Mammary epithelial cell (primary cell): ENCODE measurements at regions of chr5 and their contacts with region 1.

Region 1: GRCh38 chr5:137888857-137889759 is at the start of gene PKD2L2:
- DNase-seq: peak; percentile 80
- H3K4me3 ChIP-seq: peak within 1 kb of the TSS; percentile 11 to 47 (median 45)
- H3K27ac ChIP-seq: peak within 1 kb of the TSS; percentile 38
- H3K4me1 ChIP-seq: peaks cover 15% of the 10 kb centered on the region
- H3K27me3 ChIP-seq: no peaks in the 10 kb centered on the region
- CTCF ChIP-seq: no peak
- total RNA-seq, gene PKD2L2: not detected

Region 2: DNA sequence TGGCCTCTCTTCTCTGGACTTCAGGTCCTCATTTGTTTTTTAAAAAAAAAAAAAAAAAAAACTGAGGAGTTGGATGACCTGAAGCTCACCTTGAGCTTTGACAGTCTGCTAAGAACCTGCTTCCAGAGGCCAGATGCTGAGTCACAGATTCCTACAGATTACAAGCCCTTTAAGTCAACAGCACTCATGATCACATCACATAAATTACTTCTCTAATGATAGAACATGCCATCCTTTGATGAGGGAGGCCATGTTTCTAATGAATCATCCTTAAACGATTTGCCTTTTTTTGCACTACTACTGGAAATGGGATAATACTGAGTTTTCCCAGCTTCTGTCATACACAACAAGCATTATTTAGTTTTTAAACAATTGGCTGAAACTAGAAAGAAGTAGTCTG is 55.6 kb before region 1 on chr5:
- CTCF ChIA-PET with region 1: no interaction called
- dilution Hi-C with region 1: no loop called
- in situ Hi-C with region 1: no loop called
- intact Hi-C with region 1: loop called (anchors 5 kb)
- DNase-seq: peak; percentile 88
- H3K4me3 ChIP-seq: no peak overlapping the region
- H3K27ac ChIP-seq: no peak overlapping the region
- H3K4me1 ChIP-seq: peaks cover 10% of the 10 kb centered on the region
- H3K27me3 ChIP-seq: no peaks in the 10 kb centered on the region
- CTCF ChIP-seq: no peak

Region 3: DNA sequence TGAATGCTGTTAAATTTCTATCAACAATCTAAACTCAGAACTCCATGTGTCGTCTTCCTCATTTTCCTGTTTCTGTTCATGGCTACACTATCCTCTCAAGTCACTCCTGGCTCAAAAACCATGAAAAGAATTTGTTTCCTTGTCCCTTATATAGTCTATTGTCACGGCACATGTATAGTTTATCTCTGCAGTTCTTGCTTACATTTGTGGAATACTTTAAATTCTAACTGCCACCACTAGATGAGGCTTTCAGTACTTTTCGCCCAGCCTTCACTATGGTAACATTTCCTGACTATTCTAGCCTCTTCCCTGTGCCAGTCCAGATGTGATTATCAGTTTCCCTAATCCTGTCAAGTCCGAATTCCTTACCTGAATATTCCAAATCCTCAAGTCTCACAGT is 34.7 kb after region 1 on chr5:
- CTCF ChIA-PET with region 1: no interaction called
- dilution Hi-C with region 1: no loop called
- in situ Hi-C with region 1: no loop called
- intact Hi-C with region 1: loop called (anchors 1 kb)
- DNase-seq: no peak
- H3K4me3 ChIP-seq: no peak overlapping the region
- H3K27ac ChIP-seq: no peak overlapping the region
- H3K4me1 ChIP-seq: peaks cover 11% of the 10 kb centered on the region
- H3K27me3 ChIP-seq: no peaks in the 10 kb centered on the region
- CTCF ChIP-seq: no peak

Region 4: DNA sequence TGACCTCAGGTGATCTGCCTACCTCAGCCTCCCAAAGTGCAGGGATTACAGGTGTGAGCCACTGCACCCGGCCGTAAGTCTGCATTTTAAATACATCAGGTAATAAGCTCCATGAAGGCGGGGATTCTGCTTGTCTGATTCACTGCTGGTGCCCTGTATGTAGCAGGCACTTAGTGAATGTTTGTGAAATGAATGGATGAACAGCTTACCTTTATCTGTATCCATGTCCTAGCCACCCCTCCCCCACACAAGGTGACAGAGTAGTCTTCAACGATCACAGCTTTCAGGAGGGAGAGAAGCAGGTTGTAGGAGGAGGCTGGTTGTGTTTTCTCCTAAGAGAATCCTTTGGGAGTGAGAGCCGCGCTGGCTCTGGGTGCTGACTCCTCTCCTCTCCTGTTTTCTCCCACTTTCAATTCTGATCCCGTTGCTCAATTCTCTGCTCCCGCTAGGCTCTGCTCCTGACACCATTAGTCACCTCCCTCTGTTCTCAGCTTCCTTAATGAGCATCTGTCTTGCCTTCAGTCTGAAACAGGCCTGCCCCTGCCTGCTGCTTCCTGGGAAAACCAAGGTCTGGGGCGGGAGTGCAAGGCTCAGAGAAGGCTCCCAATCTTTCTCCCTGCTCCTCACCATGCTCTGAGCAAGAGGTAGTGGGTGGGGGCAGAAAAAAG is 775.3 kb after region 1 on chr5:
- CTCF ChIA-PET with region 1: no interaction called
- dilution Hi-C with region 1: no loop called
- in situ Hi-C with region 1: no loop called
- intact Hi-C with region 1: no loop called
- DNase-seq: peak; percentile 89
- H3K4me3 ChIP-seq: no peak overlapping the region
- H3K27ac ChIP-seq: no peak overlapping the region
- H3K4me1 ChIP-seq: peaks cover 21% of the 10 kb centered on the region
- H3K27me3 ChIP-seq: no peaks in the 10 kb centered on the region
- CTCF ChIP-seq: no peak